WTC11 (cell line): ENCODE measurements at regions of chr7 and their contacts with region 1.

Region 1: GRCh38 chr7:142375666-142376313 is 117.9 kb upstream of the PRSS58 start:
- DNase-seq: peak; percentile 81
- ATAC-seq: peak; percentile 97
- H3K4me3 Mint-ChIP-seq: no peak overlapping the region
- H3K27ac Mint-ChIP-seq: peak overlapping the region; percentile 22
- H3K4me1 Mint-ChIP-seq: peaks cover 20% of the 10 kb centered on the region
- H3K27me3 Mint-ChIP-seq: peaks cover 3% of the 10 kb centered on the region
- CTCF ChIP-seq: no peak; the same call in 1 of the 2 replicates

Region 2: DNA sequence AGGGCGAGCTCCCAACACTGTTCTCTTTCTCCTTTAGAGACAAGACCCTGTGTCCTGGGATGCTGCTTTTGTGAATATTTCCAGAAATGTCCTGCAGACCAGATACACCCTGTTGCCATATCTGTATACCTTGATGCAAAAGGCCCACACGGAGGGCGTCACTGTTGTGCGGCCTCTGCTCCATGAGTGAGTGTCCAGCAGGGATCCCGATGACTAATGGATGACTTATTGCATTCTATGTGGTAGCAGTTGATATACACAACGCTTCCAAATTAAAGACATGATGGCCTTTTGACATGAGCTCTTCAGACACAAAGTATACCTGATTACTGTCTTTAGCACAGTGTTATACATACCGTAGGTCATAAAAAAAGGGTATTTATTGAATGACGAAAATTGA is 309.3 kb before region 1 on chr7:
- CTCF ChIA-PET with region 1: no interaction called
- POLR2A ChIA-PET with region 1: no interaction called
- DNase-seq: no peak
- ATAC-seq: no peak
- H3K4me3 Mint-ChIP-seq: no peak overlapping the region
- H3K27ac Mint-ChIP-seq: no peak overlapping the region
- H3K4me1 Mint-ChIP-seq: no peaks in the 10 kb centered on the region
- H3K27me3 Mint-ChIP-seq: no peaks in the 10 kb centered on the region; the same call in 1 of the 2 replicates
- CTCF ChIP-seq: no peak

Region 3: DNA sequence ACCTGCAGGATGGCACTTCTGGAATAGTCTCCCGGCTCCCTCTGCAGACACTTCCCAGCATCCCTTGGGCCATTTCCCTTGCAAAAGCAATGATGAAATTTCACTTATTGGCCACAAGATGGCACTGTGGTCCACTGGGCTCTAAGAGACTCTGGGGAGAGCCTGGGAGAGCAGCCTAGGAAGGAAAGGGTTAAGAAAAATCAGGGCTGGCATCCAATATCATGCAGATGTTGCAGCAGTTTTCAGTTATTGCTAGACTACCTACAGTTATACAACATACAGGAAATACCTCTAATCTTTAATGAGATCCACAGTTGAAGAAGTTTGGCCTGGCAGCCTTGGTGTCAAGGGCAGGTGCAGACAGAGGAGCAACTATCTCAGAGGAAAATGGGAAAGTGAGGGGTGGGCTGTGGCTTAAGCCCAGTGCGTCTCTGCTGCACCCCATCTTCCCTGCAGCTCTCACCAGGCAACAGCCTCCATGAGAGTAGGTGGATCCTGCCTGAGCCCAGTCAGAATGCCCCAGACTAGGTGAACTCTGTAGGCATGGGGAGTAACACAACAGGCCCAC is 17.8 kb before region 1 on chr7:
- CTCF ChIA-PET with region 1: interaction called, 29 read pairs
- POLR2A ChIA-PET with region 1: no interaction called
- DNase-seq: peak; percentile 28
- ATAC-seq: peak; percentile 92
- H3K4me3 Mint-ChIP-seq: no peak overlapping the region
- H3K27ac Mint-ChIP-seq: no peak overlapping the region
- H3K4me1 Mint-ChIP-seq: peaks cover 34% of the 10 kb centered on the region
- H3K27me3 Mint-ChIP-seq: peaks cover 12% of the 10 kb centered on the region
- CTCF ChIP-seq: peak; percentile 71

Region 4: DNA sequence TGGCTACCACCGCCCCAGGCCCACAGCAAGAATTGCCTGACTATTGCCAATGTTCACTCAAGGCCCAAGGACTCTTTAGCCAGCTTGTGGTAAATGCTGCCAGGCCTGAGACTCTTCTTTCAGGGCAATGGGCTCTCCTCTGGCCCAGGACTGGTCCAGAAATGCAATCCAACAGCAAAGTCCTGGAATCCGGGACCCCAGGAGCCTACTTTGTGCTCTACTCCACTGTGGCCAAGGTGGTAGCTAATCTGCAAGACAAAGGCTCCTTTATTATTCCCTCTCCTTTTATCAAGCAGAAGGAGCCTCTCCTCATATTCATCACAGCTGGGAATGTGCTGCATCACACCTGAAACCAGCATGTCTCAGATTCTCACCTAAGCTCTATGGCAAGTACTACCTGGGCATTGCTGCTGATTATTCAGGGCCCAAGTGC is 10.4 kb before region 1 on chr7:
- CTCF ChIA-PET with region 1: interaction called, 49 read pairs
- POLR2A ChIA-PET with region 1: interaction called, 5 read pairs
- DNase-seq: peak; percentile 64
- ATAC-seq: peak; percentile 97
- H3K4me3 Mint-ChIP-seq: peak overlapping the region; percentile 28; the same call in 1 of the 2 replicates
- H3K27ac Mint-ChIP-seq: peak overlapping the region; percentile 99
- H3K4me1 Mint-ChIP-seq: peaks cover 37% of the 10 kb centered on the region
- H3K27me3 Mint-ChIP-seq: peaks cover 45% of the 10 kb centered on the region
- CTCF ChIP-seq: no peak

Region 5: GRCh38 chr7:142391191-142391992 is 15.6 kb after region 1 on chr7:
- CTCF ChIA-PET with region 1: interaction called, 24 read pairs
- POLR2A ChIA-PET with region 1: no interaction called
- DNase-seq: peak; percentile 88
- ATAC-seq: peak; percentile 96
- H3K4me3 Mint-ChIP-seq: no peak overlapping the region
- H3K27ac Mint-ChIP-seq: 0 out of 2 replicates have a peak overlapping the region, but pooled peaks have one; percentile 28
- H3K4me1 Mint-ChIP-seq: peaks cover 8% of the 10 kb centered on the region
- H3K27me3 Mint-ChIP-seq: no peaks in the 10 kb centered on the region; the same call in 1 of the 2 replicates
- CTCF ChIP-seq: peak; percentile 71

Region 6: DNA sequence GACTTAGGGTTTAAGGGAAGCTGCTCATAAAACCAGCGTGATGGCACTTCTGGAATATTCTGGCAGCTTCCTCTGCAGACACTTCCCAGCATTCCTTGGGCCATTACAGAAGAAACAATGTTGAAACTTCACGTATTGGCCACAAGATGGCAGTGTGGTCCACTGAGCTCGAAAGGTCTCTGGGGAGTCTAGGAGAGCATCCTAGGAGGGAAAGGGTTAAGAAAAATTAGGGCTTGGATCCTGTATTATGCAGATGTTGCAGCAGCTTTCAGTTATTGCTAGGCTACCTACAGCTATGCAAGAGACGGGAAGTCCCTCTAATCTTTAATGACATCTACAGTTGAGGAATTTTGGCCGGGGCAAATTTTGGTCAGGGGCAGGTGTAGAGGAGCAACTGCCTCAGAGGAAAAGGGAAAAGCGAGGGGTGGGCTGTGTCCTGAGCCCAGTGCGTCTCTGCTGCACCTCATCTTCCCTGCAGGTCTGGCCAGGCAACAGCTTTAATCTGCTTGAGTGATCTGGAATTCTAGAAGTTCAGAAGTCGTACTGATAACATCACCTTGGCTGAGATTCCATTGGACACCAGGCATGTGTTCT is 102.8 kb after region 1 on chr7:
- CTCF ChIA-PET with region 1: interaction called, 12 read pairs
- POLR2A ChIA-PET with region 1: no interaction called
- DNase-seq: peak; percentile 38
- ATAC-seq: peak; percentile 79
- H3K4me3 Mint-ChIP-seq: no peak overlapping the region
- H3K27ac Mint-ChIP-seq: no peak overlapping the region
- H3K4me1 Mint-ChIP-seq: peaks cover 11% of the 10 kb centered on the region
- H3K27me3 Mint-ChIP-seq: peaks cover 12% of the 10 kb centered on the region
- CTCF ChIP-seq: peak; percentile 62